B cell (primary cell): ENCODE measurements at regions of chr3 and their contacts with region 1.

Region 1: GRCh38 chr3:184298759-184299496 is at the start of gene PSMD2:
- DNase-seq: peak; percentile 96
- ATAC-seq: peak; percentile 95
- H3K4me3 ChIP-seq: peak within 1 kb of the TSS; percentile 63 to 92 (median 79)
- H3K4me3 Mint-ChIP-seq: peak within 1 kb of the TSS; percentile 95
- H3K27ac ChIP-seq: peak within 1 kb of the TSS; percentile 65 to 82
- H3K27ac Mint-ChIP-seq: peak within 1 kb of the TSS; percentile 91
- H3K4me1 ChIP-seq: peaks cover 12 to 17% of the 10 kb centered on the region in 2 donors
- H3K4me1 Mint-ChIP-seq: peaks cover 22% of the 10 kb centered on the region
- H3K27me3 ChIP-seq: peaks cover 0 to 2% (median 0%) of the 10 kb centered on the region in 4 experiments
- H3K27me3 Mint-ChIP-seq: peaks cover 6% of the 10 kb centered on the region
- CTCF ChIP-seq: no peak
- total RNA-seq, gene PSMD2: 140 and 145 TPM in 2 replicates

Region 2: GRCh38 chr3:183884427-183885296 is 414.3 kb before region 1 on chr3 and contains the start of gene PARL:
- CTCF ChIA-PET with region 1: no interaction called
- POLR2A ChIA-PET with region 1: no interaction called
- intact Hi-C with region 1: loop called (anchors 2 kb)
- DNase-seq: peak; percentile 95
- ATAC-seq: peak; percentile 100
- H3K4me3 ChIP-seq: peak within 1 kb of the TSS; percentile 68 to 96 (median 84)
- H3K4me3 Mint-ChIP-seq: peak within 1 kb of the TSS; percentile 92
- H3K27ac ChIP-seq: peak within 1 kb of the TSS; percentile 39 to 75
- H3K27ac Mint-ChIP-seq: peak within 1 kb of the TSS; percentile 94
- H3K4me1 ChIP-seq: peaks cover 11 to 19% of the 10 kb centered on the region in 2 donors
- H3K4me1 Mint-ChIP-seq: peaks cover 36% of the 10 kb centered on the region
- H3K27me3 ChIP-seq: peaks cover 0 to 6% (median 0%) of the 10 kb centered on the region in 4 experiments
- H3K27me3 Mint-ChIP-seq: peaks cover 3% of the 10 kb centered on the region
- CTCF ChIP-seq: peak; percentile 90
- total RNA-seq, gene PARL: 46.7 and 51.2 TPM in 2 replicates

Region 3: DNA sequence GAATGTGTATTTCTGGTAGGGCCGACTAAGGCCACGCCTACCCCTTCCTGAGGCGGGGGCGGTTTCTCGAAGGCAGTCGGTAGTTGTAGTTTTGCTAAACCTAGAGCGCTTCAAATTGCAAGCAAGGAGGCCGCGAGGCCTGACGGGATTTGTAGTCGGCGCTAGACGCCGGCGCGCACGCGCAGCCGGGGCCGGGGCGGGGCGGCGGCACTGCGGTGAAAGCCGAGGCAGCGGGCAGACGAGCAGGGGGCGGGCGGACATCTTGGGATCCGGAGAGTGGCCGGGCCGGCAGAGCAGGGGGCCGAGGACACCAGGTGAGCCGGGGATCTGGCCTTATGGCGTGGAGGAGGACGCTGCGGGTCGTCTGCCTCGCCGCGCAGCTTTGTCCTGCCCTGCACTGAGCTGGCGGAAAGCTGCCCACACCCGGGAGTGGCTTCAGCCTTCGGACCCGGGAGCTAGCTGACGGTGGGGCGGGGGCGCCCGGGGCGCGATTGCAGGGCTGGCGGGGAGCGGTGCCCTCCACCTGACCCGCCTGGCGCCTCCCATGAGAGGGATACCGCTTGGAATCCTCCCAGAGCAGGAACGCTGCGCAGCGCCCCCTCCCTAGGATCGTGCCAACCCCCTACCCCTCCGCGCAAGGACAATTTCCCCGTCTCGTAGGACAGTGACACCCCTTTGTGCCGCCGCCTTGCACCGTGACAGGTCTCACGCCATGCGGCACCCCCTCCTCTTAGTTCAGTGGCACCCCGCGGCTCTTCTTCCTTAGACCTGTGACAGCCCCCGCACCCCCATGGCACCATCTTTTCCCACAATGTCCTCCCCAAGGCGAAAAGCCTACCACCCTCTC is 124.1 kb before region 1 on chr3 and contains the start of gene AP2M1:
- CTCF ChIA-PET with region 1: no interaction called
- POLR2A ChIA-PET with region 1: no interaction called
- intact Hi-C with region 1: loop called (anchors 1 kb)
- DNase-seq: peak; percentile 98
- ATAC-seq: peak; percentile 98
- H3K4me3 ChIP-seq: peak within 1 kb of the TSS; percentile 57 to 100 (median 98)
- H3K4me3 Mint-ChIP-seq: peak within 1 kb of the TSS; percentile 93
- H3K27ac ChIP-seq: peak within 1 kb of the TSS; percentile 56 to 80
- H3K27ac Mint-ChIP-seq: peak within 1 kb of the TSS; percentile 96
- H3K4me1 ChIP-seq: peaks cover 23 to 34% of the 10 kb centered on the region in 2 donors
- H3K4me1 Mint-ChIP-seq: peaks cover 37% of the 10 kb centered on the region
- H3K27me3 ChIP-seq: no peaks in the 10 kb centered on the region
- H3K27me3 Mint-ChIP-seq: no peaks in the 10 kb centered on the region
- CTCF ChIP-seq: no peak
- total RNA-seq, gene AP2M1: 191 and 207 TPM in 2 replicates

Region 4: DNA sequence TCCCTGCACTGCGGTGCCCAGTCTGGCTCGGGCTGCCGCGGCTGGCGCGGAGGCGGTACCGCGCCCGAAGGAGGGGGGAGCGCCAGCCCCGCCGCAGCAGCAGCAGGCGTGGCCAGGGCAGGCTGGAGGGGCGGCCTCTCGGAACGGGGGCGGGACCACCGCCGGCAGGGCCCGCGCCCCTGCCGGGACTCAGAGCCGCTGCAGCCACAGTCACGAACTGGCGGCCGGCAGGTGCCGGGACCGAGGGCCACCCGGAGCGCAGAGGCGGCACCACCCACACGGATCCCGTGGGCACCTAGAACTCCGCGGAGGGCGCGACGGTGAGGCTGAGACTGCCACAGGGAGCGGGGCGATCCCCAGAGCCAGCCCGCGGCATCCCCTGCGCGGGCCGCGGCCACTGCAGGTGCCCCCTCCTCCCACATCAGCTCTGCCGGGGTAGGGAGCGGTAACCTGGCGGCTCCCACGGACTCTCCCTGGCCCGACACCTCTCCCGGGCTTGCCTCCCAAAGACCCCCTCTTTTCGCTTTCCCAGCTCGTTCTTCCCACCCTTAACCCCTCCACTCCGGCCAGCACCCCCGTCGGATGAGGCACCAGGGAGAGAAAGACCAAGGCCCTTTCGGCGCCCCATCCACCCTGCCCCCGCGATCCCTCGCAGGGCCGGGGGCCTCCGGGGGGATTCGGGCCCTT is 69.4 kb before region 1 on chr3 and contains the start of gene VWA5B2:
- CTCF ChIA-PET with region 1: interaction called, 3 read pairs
- POLR2A ChIA-PET with region 1: no interaction called
- intact Hi-C with region 1: loop called (anchors 1 kb)
- DNase-seq: peak; percentile 88
- ATAC-seq: peak; percentile 98
- H3K4me3 ChIP-seq: peak within 1 kb of the TSS; percentile 9 to 74 (median 59)
- H3K4me3 Mint-ChIP-seq: peak within 1 kb of the TSS; percentile 85
- H3K27ac ChIP-seq: no peak within 1 kb of the TSS
- H3K27ac Mint-ChIP-seq: no peak within 1 kb of the TSS
- H3K4me1 ChIP-seq: peaks cover 15 to 25% of the 10 kb centered on the region in 2 donors
- H3K4me1 Mint-ChIP-seq: peaks cover 20% of the 10 kb centered on the region
- H3K27me3 ChIP-seq: peaks cover 0 to 73% (median 39%) of the 10 kb centered on the region in 4 experiments
- H3K27me3 Mint-ChIP-seq: peaks cover 44% of the 10 kb centered on the region
- CTCF ChIP-seq: peak; percentile 37
- total RNA-seq, gene VWA5B2: 0.37 TPM in 1 of 2 replicates, not detected in the other

Region 5: GRCh38 chr3:184314363-184314699 is 15.4 kb after region 1 on chr3 and contains the start of gene EIF4G1:
- CTCF ChIA-PET with region 1: interaction called, 3 read pairs
- POLR2A ChIA-PET with region 1: interaction called, 3 read pairs
- intact Hi-C with region 1: loop called (anchors 1 kb)
- DNase-seq: peak; percentile 96
- ATAC-seq: peak; percentile 90
- H3K4me3 ChIP-seq: peak within 1 kb of the TSS; percentile 43 to 71 (median 61)
- H3K4me3 Mint-ChIP-seq: peak within 1 kb of the TSS; percentile 90
- H3K27ac ChIP-seq: peak within 1 kb of the TSS; percentile 73 to 89
- H3K27ac Mint-ChIP-seq: peak within 1 kb of the TSS; percentile 88
- H3K4me1 ChIP-seq: peaks cover 13 to 23% of the 10 kb centered on the region in 2 donors
- H3K4me1 Mint-ChIP-seq: peaks cover 31% of the 10 kb centered on the region
- H3K27me3 ChIP-seq: no peaks in the 10 kb centered on the region
- H3K27me3 Mint-ChIP-seq: no peaks in the 10 kb centered on the region
- CTCF ChIP-seq: no peak
- total RNA-seq, gene EIF4G1: 160 TPM in 2 replicates

Region 6: DNA sequence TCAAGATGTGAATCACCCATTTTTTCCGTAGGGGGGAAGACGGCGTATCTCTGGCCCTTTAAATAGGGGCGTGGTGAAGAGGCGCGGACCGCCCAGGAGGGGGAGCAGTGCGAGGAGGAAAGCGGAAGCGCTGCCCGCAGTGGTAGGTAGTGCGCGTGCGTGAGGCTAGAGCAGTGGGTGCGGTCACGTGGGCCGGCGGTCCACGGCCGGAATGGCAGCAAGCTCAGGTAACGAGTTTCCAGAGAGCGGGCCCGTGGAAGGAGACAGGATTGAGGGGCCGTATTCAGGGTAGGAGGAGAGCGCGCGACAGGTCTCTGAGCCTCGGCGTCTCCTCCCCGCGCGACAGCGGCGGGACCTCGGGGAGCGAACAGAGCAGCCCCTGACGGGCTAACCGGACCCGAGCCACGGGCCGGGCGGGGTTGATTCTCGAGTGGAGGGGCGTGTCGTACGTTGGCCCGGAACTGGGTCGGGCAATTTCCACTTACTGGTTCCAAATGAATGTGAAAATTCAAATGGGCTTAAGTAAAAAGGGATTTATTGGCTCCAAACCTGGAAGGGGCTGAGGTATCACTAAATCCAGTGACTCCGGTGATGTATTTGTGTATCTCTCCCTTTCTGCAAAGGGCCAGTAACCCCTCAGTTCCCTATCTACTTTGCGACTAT is 513.2 kb after region 1 on chr3 and contains the start of gene VPS8:
- CTCF ChIA-PET with region 1: no interaction called
- POLR2A ChIA-PET with region 1: no interaction called
- intact Hi-C with region 1: loop called (anchors 2 kb)
- DNase-seq: peak; percentile 98
- ATAC-seq: peak; percentile 94
- H3K4me3 ChIP-seq: peak within 1 kb of the TSS; percentile 77 to 95 (median 92)
- H3K4me3 Mint-ChIP-seq: peak within 1 kb of the TSS; percentile 93
- H3K27ac ChIP-seq: peak within 1 kb of the TSS; percentile 70 to 76
- H3K27ac Mint-ChIP-seq: peak within 1 kb of the TSS; percentile 96
- H3K4me1 ChIP-seq: peaks cover 16 to 18% of the 10 kb centered on the region in 2 donors
- H3K4me1 Mint-ChIP-seq: peaks cover 28% of the 10 kb centered on the region
- H3K27me3 ChIP-seq: no peaks in the 10 kb centered on the region
- H3K27me3 Mint-ChIP-seq: peaks cover 3% of the 10 kb centered on the region
- CTCF ChIP-seq: peak; percentile 46
- total RNA-seq, gene VPS8: 95.6 and 106 TPM in 2 replicates

Region 7: DNA sequence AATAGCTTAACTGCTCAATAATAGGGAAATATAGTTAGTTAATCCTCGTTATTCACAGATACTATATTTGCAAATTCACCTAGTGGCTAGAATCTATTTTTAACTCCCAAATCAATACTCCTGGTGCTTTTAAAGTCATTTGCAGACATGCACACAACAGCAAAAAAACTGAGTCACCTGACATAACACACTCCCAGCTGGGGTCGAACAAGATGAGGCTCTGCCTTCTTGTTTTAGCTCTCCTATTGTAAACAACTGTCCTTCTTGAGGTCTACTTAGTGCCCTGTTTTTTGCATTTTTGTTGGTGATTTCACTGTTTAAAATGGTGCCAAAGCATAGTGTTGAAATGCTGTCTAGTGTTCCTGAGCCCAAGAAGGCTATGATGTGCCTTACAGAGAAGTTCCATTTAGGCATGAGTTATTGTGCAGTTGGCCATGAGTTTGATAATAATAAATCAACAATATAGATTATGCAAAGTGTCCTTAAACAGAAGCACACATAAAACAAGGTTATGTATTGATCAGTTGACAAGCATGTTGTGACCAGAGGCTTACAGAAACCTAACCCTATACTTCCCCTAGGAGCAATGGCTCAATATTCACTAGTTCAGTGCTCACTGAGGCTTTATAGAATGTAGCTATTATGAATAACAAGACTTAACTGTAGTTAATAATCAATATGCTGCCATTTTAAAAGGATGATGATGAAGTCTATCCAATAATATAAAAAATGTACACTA is 1082.6 kb after region 1 on chr3:
- CTCF ChIA-PET with region 1: no interaction called
- POLR2A ChIA-PET with region 1: no interaction called
- intact Hi-C with region 1: no loop called
- DNase-seq: no peak
- ATAC-seq: no peak
- H3K4me3 ChIP-seq: no peak overlapping the region
- H3K4me3 Mint-ChIP-seq: no peak overlapping the region
- H3K27ac ChIP-seq: no peak overlapping the region
- H3K27ac Mint-ChIP-seq: no peak overlapping the region
- H3K4me1 ChIP-seq: no peaks in the 10 kb centered on the region
- H3K4me1 Mint-ChIP-seq: no peaks in the 10 kb centered on the region
- H3K27me3 ChIP-seq: no peaks in the 10 kb centered on the region
- H3K27me3 Mint-ChIP-seq: peaks cover 20% of the 10 kb centered on the region
- CTCF ChIP-seq: no peak